ENCODE measurements at regions of chr3 and their contacts with region 1.

Region 1: DNA sequence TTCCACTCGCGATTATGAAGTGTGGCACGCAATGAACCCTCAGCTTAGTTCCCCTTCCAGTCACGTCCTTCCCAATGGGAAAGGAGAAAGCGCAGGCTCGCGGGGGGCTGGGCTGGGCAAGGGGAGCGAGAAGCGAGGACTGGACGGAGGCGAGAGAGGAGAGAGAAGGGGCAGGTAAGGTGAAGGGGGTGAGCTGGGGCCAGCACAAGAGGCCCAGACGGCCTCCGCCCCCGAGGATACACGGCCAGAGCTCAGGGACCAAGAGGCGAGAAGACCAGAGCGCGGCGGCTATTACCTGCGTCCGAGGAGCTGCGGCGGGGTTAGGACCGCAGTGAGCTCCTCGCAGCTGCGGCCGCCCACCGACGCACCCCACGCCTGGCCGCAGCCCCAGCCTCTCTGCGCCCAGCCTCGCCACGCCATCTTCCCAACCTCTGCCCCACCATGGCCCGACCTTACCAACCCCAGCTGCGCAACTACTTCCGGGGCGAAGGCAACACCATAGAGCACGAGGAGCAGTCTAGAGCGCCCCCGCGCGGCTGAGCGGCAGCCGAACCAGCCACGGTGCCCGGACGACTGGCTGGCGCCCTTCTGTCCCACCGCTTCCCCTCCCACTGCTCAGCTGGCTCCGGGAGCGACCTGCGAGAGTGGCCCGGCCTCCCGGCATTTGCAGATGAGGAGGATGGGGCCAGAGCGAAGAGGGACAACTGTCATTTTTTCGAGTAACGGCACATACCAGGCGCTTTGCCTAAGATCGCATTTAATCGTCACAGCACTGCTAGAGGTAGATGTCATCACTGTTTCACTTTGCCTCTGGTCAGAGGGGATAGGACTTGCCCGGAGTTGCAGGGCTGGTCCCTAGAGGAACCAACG is at the start of gene PARL:
- DNase-seq: peak; percentile 96
- H3K4me3 Mint-ChIP-seq: peak within 1 kb of the TSS; percentile 93
- H3K27ac Mint-ChIP-seq: peak within 1 kb of the TSS; percentile 74
- H3K4me1 Mint-ChIP-seq: peaks cover 30% of the 10 kb centered on the region
- H3K27me3 Mint-ChIP-seq: peaks cover under 1% of the 10 kb centered on the region
- total RNA-seq, gene PARL: 47.6 to 49.0 TPM

Region 2: DNA sequence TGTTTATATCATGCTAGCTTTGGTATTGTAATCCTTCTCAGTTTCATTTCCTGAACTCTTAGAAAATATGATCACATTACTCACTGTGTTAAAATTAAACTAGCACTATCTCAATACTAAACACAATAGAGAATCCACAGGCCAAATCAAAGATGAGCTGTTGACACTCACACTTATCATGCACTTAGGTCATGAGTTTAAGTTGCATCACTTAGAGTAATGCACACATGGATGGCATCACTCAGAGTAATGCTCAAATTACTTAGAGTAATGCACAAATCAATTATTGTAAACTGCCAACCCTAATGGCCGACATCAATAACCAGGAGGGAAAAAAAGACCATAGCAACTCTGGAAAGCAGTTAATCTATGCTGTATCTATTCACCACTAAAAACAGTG is 416.2 kb before region 1 on chr3:
- CTCF ChIA-PET with region 1: interaction called, 16 read pairs
- POLR2A ChIA-PET with region 1: interaction called, 3 read pairs
- DNase-seq: no peak
- H3K4me3 Mint-ChIP-seq: no peak overlapping the region
- H3K27ac Mint-ChIP-seq: peak overlapping the region; percentile 59
- H3K4me1 Mint-ChIP-seq: peaks cover 23% of the 10 kb centered on the region
- H3K27me3 Mint-ChIP-seq: no peaks in the 10 kb centered on the region

Region 3: GRCh38 chr3:183537295-183537730 is 347.3 kb before region 1 on chr3:
- CTCF ChIA-PET with region 1: no interaction called
- POLR2A ChIA-PET with region 1: no interaction called
- DNase-seq: no peak
- H3K4me3 Mint-ChIP-seq: no peak overlapping the region
- H3K27ac Mint-ChIP-seq: no peak overlapping the region
- H3K4me1 Mint-ChIP-seq: peaks cover 53% of the 10 kb centered on the region
- H3K27me3 Mint-ChIP-seq: no peaks in the 10 kb centered on the region

Region 4: GRCh38 chr3:183584246-183584913 is 300.3 kb before region 1 on chr3:
- CTCF ChIA-PET with region 1: no interaction called
- POLR2A ChIA-PET with region 1: no interaction called
- DNase-seq: no peak
- H3K4me3 Mint-ChIP-seq: no peak overlapping the region
- H3K27ac Mint-ChIP-seq: no peak overlapping the region
- H3K4me1 Mint-ChIP-seq: peaks cover 43% of the 10 kb centered on the region
- H3K27me3 Mint-ChIP-seq: no peaks in the 10 kb centered on the region

Region 5: DNA sequence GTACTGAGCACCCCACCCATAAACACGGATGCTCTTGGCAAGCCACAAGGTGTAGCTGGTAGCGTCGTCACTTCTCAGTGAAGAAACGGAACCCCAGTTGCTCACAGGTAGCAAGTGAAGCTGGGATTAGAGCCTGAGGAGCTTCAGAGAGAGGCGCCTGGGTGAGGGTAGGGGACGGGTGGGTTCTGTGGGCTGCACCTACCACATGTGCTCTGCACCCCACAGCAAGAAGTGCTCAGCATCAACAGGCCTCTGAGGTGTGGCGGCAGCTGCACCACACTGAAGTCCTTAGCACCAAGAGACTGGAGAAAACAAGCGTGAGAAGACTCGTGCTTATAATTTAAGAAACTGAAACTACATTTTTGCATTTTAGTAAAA is 69.1 kb before region 1 on chr3:
- CTCF ChIA-PET with region 1: interaction called, 11 read pairs
- POLR2A ChIA-PET with region 1: interaction called, 7 read pairs
- DNase-seq: peak; percentile 18
- H3K4me3 Mint-ChIP-seq: no peak overlapping the region
- H3K27ac Mint-ChIP-seq: peak overlapping the region; percentile 75
- H3K4me1 Mint-ChIP-seq: peaks cover 22% of the 10 kb centered on the region
- H3K27me3 Mint-ChIP-seq: no peaks in the 10 kb centered on the region

Region 6: DNA sequence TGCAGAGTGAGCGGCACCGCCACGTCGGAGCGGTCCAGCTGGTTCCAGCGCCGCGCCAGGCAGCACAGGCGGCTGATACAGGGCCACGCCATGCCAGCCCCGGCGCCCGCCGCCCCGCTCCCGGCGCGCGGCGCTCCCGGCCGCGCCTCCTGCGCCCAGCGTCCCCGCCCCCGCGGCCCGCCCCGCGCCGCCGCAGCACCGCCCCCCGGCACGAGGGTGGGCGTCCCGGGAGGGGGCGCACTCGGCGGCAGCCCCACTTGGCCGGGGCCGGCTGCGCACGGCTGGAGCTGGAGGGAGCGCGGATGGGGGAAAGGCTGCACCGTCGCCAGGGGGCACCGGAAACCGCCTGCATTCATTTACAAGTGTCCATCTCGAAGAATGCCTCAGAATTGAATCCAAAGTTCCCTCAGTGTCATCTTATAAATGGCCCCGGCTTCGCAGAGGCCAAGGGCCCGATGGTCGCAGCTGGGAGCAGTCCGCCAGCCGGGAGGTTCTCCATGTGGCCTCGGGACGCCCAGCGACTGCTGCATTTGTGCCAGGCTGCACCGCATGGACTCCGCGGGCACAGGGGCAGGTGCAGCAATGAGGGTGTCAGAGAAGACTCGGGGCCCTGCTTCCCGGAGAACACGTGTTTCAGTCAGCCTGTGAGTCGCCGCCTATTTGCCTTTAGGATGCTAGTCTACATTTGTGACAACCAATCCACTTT is 59.1 kb before region 1 on chr3 and contains the start of gene MAP6D1:
- CTCF ChIA-PET with region 1: interaction called, 11 read pairs
- POLR2A ChIA-PET with region 1: interaction called, 4 read pairs
- DNase-seq: peak; percentile 22
- H3K4me3 Mint-ChIP-seq: peak within 1 kb of the TSS; percentile 53
- H3K27ac Mint-ChIP-seq: no peak within 1 kb of the TSS
- H3K4me1 Mint-ChIP-seq: peaks cover 12% of the 10 kb centered on the region
- H3K27me3 Mint-ChIP-seq: peaks cover 13% of the 10 kb centered on the region
- total RNA-seq, gene MAP6D1: 0.55 TPM in 1 of 2 experiments, not detected in the other

Region 7: GRCh38 chr3:183895296-183895695 is 10.6 kb after region 1 on chr3:
- CTCF ChIA-PET with region 1: interaction called, 24 read pairs
- POLR2A ChIA-PET with region 1: interaction called, 5 read pairs
- DNase-seq: peak; percentile 40
- H3K4me3 Mint-ChIP-seq: no peak overlapping the region
- H3K27ac Mint-ChIP-seq: no peak overlapping the region
- H3K4me1 Mint-ChIP-seq: peaks cover 3% of the 10 kb centered on the region
- H3K27me3 Mint-ChIP-seq: peaks cover 12% of the 10 kb centered on the region